ENCODE measurements at regions of chr11 and their contacts with region 1.

Region 1: GRCh38 chr11:8263769-8264410 is at the start of gene LMO1:
- DNase-seq: no peak
- H3K4me3 ChIP-seq: peak within 1 kb of the TSS; percentile 16
- H3K27me3 ChIP-seq: peaks cover 63% of the 10 kb centered on the region
- CTCF ChIP-seq: peak; percentile 93
- polyA plus RNA-seq, gene LMO1: not detected in 2 replicates

Region 2: GRCh38 chr11:8219257-8220021 is 44.5 kb before region 1 on chr11:
- CTCF ChIA-PET with region 1: interaction called, 49 read pairs
- POLR2A ChIA-PET with region 1: no interaction called
- DNase-seq: no peak
- H3K4me3 ChIP-seq: no peak overlapping the region
- H3K27me3 ChIP-seq: peaks cover 4% of the 10 kb centered on the region; the same call in 1 of the 2 replicates
- CTCF ChIP-seq: peak; percentile 79

Region 3: GRCh38 chr11:8233691-8234424 is 30.0 kb before region 1 on chr11:
- CTCF ChIA-PET with region 1: interaction called, 39 read pairs
- POLR2A ChIA-PET with region 1: no interaction called
- DNase-seq: no peak
- H3K4me3 ChIP-seq: no peak overlapping the region
- H3K27me3 ChIP-seq: peaks cover 2% of the 10 kb centered on the region; the same call in 1 of the 2 replicates
- CTCF ChIP-seq: no peak

Region 4: DNA sequence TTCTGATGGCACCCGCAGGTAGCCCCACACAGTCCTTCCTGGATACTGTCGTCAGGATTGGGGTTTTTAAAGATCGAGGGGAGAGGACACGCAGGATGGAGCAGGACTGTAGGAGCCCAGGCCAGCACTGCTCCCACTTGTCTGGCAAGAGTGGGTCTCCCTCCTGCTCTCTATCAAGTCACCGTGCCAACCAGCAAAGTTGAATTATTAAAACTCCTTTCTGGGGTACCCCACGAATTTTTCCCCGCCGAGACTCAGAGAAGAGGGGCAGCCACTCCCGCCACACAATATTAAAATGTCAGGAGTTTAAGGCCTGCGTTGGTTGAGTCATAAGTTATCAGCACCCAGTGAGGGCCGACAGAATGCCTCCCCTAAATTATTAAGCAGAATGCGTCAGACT is 10.3 kb before region 1 on chr11:
- CTCF ChIA-PET with region 1: interaction called, 38 read pairs
- POLR2A ChIA-PET with region 1: no interaction called
- DNase-seq: no peak
- H3K4me3 ChIP-seq: no peak overlapping the region
- H3K27me3 ChIP-seq: peaks cover 3% of the 10 kb centered on the region
- CTCF ChIP-seq: no peak

Region 5: GRCh38 chr11:8283465-8284230 is 19.8 kb after region 1 on chr11:
- CTCF ChIA-PET with region 1: interaction called, 39 read pairs
- POLR2A ChIA-PET with region 1: no interaction called
- DNase-seq: no peak
- H3K4me3 ChIP-seq: no peak overlapping the region
- H3K27me3 ChIP-seq: peaks cover 6% of the 10 kb centered on the region; the same call in 1 of the 2 replicates
- CTCF ChIP-seq: no peak

Region 6: DNA sequence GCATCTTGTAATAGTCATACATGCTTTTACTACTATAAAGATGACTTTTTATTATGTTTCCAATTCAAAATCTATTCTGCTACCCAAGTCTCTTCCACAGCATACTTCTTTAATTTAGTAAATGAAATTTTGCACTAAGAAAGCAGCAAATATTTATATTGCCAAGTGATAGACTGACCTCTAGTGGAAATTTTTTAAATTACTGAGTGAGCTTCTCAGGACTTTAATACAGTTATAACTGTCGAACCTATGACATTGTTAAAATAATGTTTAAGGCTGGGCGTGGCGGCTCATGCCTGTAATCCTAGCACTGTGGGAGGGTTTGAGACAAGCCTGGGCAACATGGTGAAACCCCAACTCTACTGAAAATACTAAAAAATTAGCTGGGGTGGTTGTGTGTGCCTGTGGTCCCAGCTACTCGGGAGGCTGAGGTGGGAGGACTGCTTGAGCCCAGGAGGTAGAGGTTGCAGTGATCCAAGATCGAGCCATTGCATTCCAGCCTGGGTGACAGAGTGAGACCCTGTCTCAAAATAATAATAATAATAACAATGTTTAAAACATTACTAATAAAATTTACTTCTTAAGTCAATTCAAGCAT is 302.8 kb after region 1 on chr11:
- CTCF ChIA-PET with region 1: interaction called, 10 read pairs
- POLR2A ChIA-PET with region 1: no interaction called
- DNase-seq: no peak
- H3K4me3 ChIP-seq: no peak overlapping the region
- H3K27me3 ChIP-seq: peaks cover 4% of the 10 kb centered on the region; the same call in 1 of the 2 replicates
- CTCF ChIP-seq: peak; percentile 53